Aorta (tissue), 5 donors: ENCODE measurements at regions of chr5 and their contacts with region 1.

Region 1: GRCh38 chr5:159915904-159916840 is at the start of gene ADRA1B:
- DNase-seq: peak; percentile 86 to 94
- ATAC-seq: peak; percentile 87
- H3K4me3 ChIP-seq: peak within 1 kb of the TSS; percentile 51 to 80
- H3K27ac ChIP-seq: peak within 1 kb of the TSS; percentile 94 to 96
- H3K4me1 ChIP-seq: peaks cover 9 to 11% of the 10 kb centered on the region in 2 donors
- H3K27me3 ChIP-seq: no peaks in the 10 kb centered on the region
- total RNA-seq, gene ADRA1B: 5.4 to 16.0 TPM

Region 2: GRCh38 chr5:159451197-159452052 is 464.7 kb before region 1 on chr5:
- intact Hi-C with region 1: loop called in 1 of 2 experiments (anchors 2 kb)
- DNase-seq: peak in 1 of 2 donors; percentile 63
- ATAC-seq: peak; percentile 86
- H3K4me3 ChIP-seq: no peak overlapping the region
- H3K27ac ChIP-seq: peak overlapping the region; percentile 16 to 83
- H3K4me1 ChIP-seq: peaks cover 0 to 10% of the 10 kb centered on the region in 2 donors
- H3K27me3 ChIP-seq: no peaks in the 10 kb centered on the region

Region 3: GRCh38 chr5:159605585-159605984 is 310.6 kb before region 1 on chr5:
- intact Hi-C with region 1: loop called in 1 of 2 experiments (anchors 10 kb)
- DNase-seq: no peak
- ATAC-seq: no peak
- H3K4me3 ChIP-seq: no peak overlapping the region
- H3K27ac ChIP-seq: peak overlapping the region in 1 of 2 donors; percentile 40
- H3K4me1 ChIP-seq: peaks cover 0 to 3% of the 10 kb centered on the region in 2 donors
- H3K27me3 ChIP-seq: no peaks in the 10 kb centered on the region

Region 4: DNA sequence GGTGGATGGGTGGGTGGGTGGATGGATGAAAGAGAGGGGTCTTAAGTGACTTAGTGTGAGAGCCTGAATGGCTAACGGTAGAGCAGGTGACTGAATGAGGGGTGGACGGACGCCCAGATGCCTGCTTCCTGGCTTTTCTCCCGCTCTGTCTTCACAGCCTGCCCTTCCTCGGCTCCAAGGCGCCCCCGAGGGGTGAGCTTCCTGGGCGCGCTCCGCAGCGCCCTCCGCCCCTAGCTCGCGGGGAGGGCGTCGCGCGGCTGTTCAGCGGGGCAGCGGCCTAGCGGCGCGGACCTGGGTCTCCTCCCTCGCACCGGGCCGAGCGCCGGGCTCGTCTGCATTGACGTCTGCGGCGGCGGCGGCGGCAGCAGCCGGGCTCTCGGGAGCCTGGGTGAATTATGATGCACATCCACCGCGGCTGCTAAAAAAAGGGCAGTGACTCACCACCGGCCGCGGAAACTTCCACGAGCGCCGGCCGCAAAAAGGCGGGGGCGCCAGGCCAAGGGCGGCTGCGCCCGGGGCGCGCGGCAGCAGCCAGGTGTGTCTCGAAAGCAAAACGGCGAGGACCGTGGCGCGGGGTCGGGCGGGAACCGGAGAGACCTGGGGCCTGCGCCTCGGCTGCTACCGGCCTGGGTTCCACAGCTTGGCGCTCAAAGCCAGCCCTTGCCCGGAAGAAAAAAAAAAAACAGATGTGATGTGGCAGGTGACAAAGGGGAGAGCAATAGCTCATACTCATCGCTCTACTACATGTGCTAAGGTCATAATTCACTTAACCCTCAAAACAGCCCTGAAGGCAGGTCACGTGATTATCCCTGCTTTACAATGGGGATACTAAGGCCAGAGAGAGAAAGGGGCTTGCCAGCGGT is 142.9 kb before region 1 on chr5:
- intact Hi-C with region 1: loop called in 1 of 2 experiments (anchors 5 kb)
- DNase-seq: peak; percentile 92 to 96
- ATAC-seq: peak; percentile 95
- H3K4me3 ChIP-seq: no peak overlapping the region
- H3K27ac ChIP-seq: peak overlapping the region; percentile 59 to 83
- H3K4me1 ChIP-seq: peaks cover 5 to 6% of the 10 kb centered on the region in 2 donors
- H3K27me3 ChIP-seq: no peaks in the 10 kb centered on the region

Region 5: GRCh38 chr5:159975462-159976019 is 59.4 kb after region 1 on chr5:
- intact Hi-C with region 1: loop called (anchors 5 kb)
- DNase-seq: peak in 1 of 2 donors; percentile 69
- ATAC-seq: peak; percentile 86
- H3K4me3 ChIP-seq: no peak overlapping the region
- H3K27ac ChIP-seq: peak overlapping the region; percentile 63 to 95
- H3K4me1 ChIP-seq: peaks cover 3 to 4% of the 10 kb centered on the region in 2 donors
- H3K27me3 ChIP-seq: no peaks in the 10 kb centered on the region